ENCODE measurements at regions of chr6 and their contacts with region 1.

Region 1: DNA sequence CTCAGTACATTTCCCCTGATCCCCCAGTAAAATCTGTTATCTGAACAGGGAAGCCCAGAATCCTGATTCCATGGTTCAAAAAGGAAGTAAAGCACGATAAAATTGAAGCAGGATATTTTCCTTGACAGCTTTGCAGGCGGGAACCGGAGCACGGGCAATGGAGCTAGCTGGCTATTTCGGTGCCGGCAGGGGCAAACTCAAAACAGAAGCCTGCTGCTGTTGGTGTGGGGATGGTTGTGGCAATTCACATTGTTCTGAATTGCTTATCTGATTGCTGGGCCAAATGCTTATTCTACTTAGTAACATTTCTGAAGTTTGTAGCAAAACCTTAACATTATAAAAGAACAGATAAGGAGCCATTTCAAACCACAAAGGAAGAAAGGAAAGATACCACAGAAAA is 172.4 kb downstream of the MMS22L start:
- DNase-seq: no peak
- H3K4me3 Mint-ChIP-seq: no peak overlapping the region
- H3K27ac Mint-ChIP-seq: no peak overlapping the region
- H3K4me1 Mint-ChIP-seq: peaks cover 17% of the 10 kb centered on the region
- H3K27me3 Mint-ChIP-seq: peaks cover 1% of the 10 kb centered on the region

Region 2: GRCh38 chr6:96907498-96907897 is 203.1 kb before region 1 on chr6:
- intact Hi-C with region 1: loop called (anchors 5 kb)
- DNase-seq: no peak
- H3K4me3 Mint-ChIP-seq: peak overlapping the region; percentile 6
- H3K27ac Mint-ChIP-seq: no peak overlapping the region
- H3K4me1 Mint-ChIP-seq: peaks cover 14% of the 10 kb centered on the region
- H3K27me3 Mint-ChIP-seq: peaks cover 1% of the 10 kb centered on the region

Region 3: DNA sequence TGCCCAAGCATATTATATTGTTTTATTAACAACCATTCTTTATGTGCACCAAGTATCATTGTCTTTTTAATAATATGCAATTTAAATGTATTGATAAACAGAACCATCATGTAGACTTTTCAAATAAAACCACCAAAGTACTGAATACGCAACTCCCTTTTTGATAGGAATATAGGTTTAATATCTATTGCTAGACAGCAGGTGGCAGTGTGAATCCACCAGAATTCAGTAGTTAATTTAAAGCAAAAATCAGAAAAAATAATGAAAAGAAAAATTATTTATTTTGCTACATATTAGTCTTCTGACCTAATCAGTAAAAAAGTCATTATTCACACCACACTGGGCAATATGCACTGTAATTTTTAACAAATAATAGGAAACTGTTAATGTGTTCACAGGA is 42.4 kb before region 1 on chr6:
- intact Hi-C with region 1: loop called (anchors 1 kb)
- DNase-seq: no peak
- H3K4me3 Mint-ChIP-seq: no peak overlapping the region
- H3K27ac Mint-ChIP-seq: no peak overlapping the region
- H3K4me1 Mint-ChIP-seq: peaks cover 9% of the 10 kb centered on the region
- H3K27me3 Mint-ChIP-seq: peaks cover 1% of the 10 kb centered on the region

Region 4: GRCh38 chr6:97136335-97136991 is 25.8 kb after region 1 on chr6:
- intact Hi-C with region 1: loop called (anchors 2 kb)
- DNase-seq: no peak
- H3K4me3 Mint-ChIP-seq: no peak overlapping the region
- H3K27ac Mint-ChIP-seq: no peak overlapping the region
- H3K4me1 Mint-ChIP-seq: no peaks in the 10 kb centered on the region
- H3K27me3 Mint-ChIP-seq: no peaks in the 10 kb centered on the region

Region 5: GRCh38 chr6:98241630-98242029 is 1131.0 kb after region 1 on chr6:
- intact Hi-C with region 1: no loop called
- DNase-seq: no peak
- H3K4me3 Mint-ChIP-seq: no peak overlapping the region
- H3K27ac Mint-ChIP-seq: no peak overlapping the region
- H3K4me1 Mint-ChIP-seq: no peaks in the 10 kb centered on the region
- H3K27me3 Mint-ChIP-seq: no peaks in the 10 kb centered on the region

Measured in activated T-helper 1 cell treated with anti-CD3 and anti-CD28 coated beads, Interleukin-12 subunit alpha, Interleukin-12 subunit beta, Interleukin-2, Interleukin-4 antibody, amounts not matched to agents 30 ng/mL and 10 ng/mL and 1 ng/mL, durations not matched to agents 14 hours and 24 hours and 36 hours (primary cell).